GM12878 (cell line): ENCODE measurements at regions of chr1 and their contacts with region 1.

Region 1: GRCh38 chr1:179081687-179082332 is at the start of gene TOR3A:
- DNase-seq: peak; percentile 81
- ATAC-seq: peak; percentile 90
- H3K4me3 ChIP-seq: peak within 1 kb of the TSS; percentile 95
- H3K27ac ChIP-seq: peak within 1 kb of the TSS; percentile 96
- H3K4me1 ChIP-seq: peaks cover 16% of the 10 kb centered on the region
- H3K27me3 ChIP-seq: no peaks in the 10 kb centered on the region
- CTCF ChIP-seq: no peak
- EP300 ChIP-seq: peak in 1 of 2 experiments; percentile 52; a peak in 1 of 4 replicates
- POLR2A ChIP-seq: peak; percentile 98
- RAD21 ChIP-seq: no peak
- polyA plus RNA-seq, gene TOR3A: 8.6 to 14.5 TPM

Region 2: GRCh38 chr1:179025125-179025974 is 56.5 kb before region 1 on chr1 and contains the start of gene FAM20B:
- CTCF ChIA-PET with region 1: interaction called, 6 read pairs
- POLR2A ChIA-PET with region 1: interaction called, 6 read pairs
- RAD21 ChIA-PET with region 1: interaction called, 10 read pairs
- SMC1A ChIA-PET with region 1: interaction called, 30 read pairs
- in situ Hi-C with region 1: no loop called
- intact Hi-C with region 1: loop called (anchors 5 kb)
- DNase-seq: peak; percentile 59
- ATAC-seq: peak; percentile 89
- H3K4me3 ChIP-seq: peak within 1 kb of the TSS; percentile 72
- H3K27ac ChIP-seq: peak within 1 kb of the TSS; percentile 81
- H3K4me1 ChIP-seq: peaks cover 19% of the 10 kb centered on the region
- H3K27me3 ChIP-seq: no peaks in the 10 kb centered on the region
- CTCF ChIP-seq: no peak
- EP300 ChIP-seq: no peak
- POLR2A ChIP-seq: no peak
- RAD21 ChIP-seq: no peak
- polyA plus RNA-seq, gene FAM20B: 2.4 to 4.0 TPM

Region 3: DNA sequence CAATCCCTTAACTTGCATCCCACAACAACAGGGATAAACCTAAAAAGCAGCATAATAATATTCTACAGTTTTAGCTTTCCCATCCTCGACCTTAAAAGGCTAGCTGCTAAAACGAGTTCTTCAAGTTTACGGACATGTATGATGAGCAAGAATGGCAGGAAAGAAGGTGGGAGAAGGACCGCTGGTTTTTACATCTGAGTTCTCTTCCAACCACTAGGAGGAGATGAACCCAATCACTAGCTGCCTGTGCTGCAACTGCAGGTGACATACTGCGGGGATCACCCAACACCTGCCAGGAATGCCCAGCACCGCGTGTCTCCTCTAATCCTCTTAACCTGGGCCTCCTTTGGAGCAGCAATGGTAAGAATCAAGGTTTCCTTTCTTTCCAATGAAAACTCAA is 23.5 kb after region 1 on chr1:
- CTCF ChIA-PET with region 1: interaction called, 13 read pairs
- POLR2A ChIA-PET with region 1: no interaction called
- RAD21 ChIA-PET with region 1: interaction called, 6 read pairs
- SMC1A ChIA-PET with region 1: interaction called, 10 read pairs
- in situ Hi-C with region 1: no loop called
- intact Hi-C with region 1: no loop called
- DNase-seq: no peak
- ATAC-seq: peak; percentile 63
- H3K4me3 ChIP-seq: no peak overlapping the region
- H3K27ac ChIP-seq: no peak overlapping the region
- H3K4me1 ChIP-seq: no peaks in the 10 kb centered on the region
- H3K27me3 ChIP-seq: no peaks in the 10 kb centered on the region
- CTCF ChIP-seq: peak; percentile 19 to 32 (median 26); a peak in 4 of 6 replicates
- EP300 ChIP-seq: no peak
- POLR2A ChIP-seq: no peak
- RAD21 ChIP-seq: 0 out of 2 replicates have a peak, but pooled peaks have one; percentile 15

Region 4: GRCh38 chr1:179121159-179121938 is 39.5 kb after region 1 on chr1:
- CTCF ChIA-PET with region 1: interaction called, 21 read pairs
- POLR2A ChIA-PET with region 1: interaction called, 3 read pairs
- RAD21 ChIA-PET with region 1: interaction called, 9 read pairs
- SMC1A ChIA-PET with region 1: interaction called, 35 read pairs
- in situ Hi-C with region 1: no loop called
- intact Hi-C with region 1: no loop called
- DNase-seq: no peak
- ATAC-seq: peak; percentile 67
- H3K4me3 ChIP-seq: no peak overlapping the region
- H3K27ac ChIP-seq: no peak overlapping the region
- H3K4me1 ChIP-seq: no peaks in the 10 kb centered on the region
- H3K27me3 ChIP-seq: no peaks in the 10 kb centered on the region
- CTCF ChIP-seq: peak; percentile 58 to 62 (median 61)
- EP300 ChIP-seq: no peak
- POLR2A ChIP-seq: no peak
- RAD21 ChIP-seq: peak; percentile 79

Region 5: GRCh38 chr1:179127163-179127895 is 45.5 kb after region 1 on chr1:
- CTCF ChIA-PET with region 1: interaction called, 21 read pairs
- POLR2A ChIA-PET with region 1: interaction called, 3 read pairs
- RAD21 ChIA-PET with region 1: interaction called, 5 read pairs
- SMC1A ChIA-PET with region 1: interaction called, 35 read pairs
- in situ Hi-C with region 1: no loop called
- intact Hi-C with region 1: no loop called
- DNase-seq: no peak
- ATAC-seq: no peak
- H3K4me3 ChIP-seq: no peak overlapping the region
- H3K27ac ChIP-seq: no peak overlapping the region
- H3K4me1 ChIP-seq: peaks cover 6% of the 10 kb centered on the region
- H3K27me3 ChIP-seq: no peaks in the 10 kb centered on the region
- CTCF ChIP-seq: no peak
- EP300 ChIP-seq: no peak
- POLR2A ChIP-seq: no peak
- RAD21 ChIP-seq: no peak

Region 6: GRCh38 chr1:179137623-179138255 is 55.9 kb after region 1 on chr1:
- CTCF ChIA-PET with region 1: no interaction called
- POLR2A ChIA-PET with region 1: no interaction called
- RAD21 ChIA-PET with region 1: no interaction called
- SMC1A ChIA-PET with region 1: no interaction called
- in situ Hi-C with region 1: no loop called
- intact Hi-C with region 1: no loop called
- DNase-seq: no peak
- ATAC-seq: no peak
- H3K4me3 ChIP-seq: no peak overlapping the region
- H3K27ac ChIP-seq: no peak overlapping the region
- H3K4me1 ChIP-seq: no peaks in the 10 kb centered on the region; the same call in 1 of the 2 replicates
- H3K27me3 ChIP-seq: no peaks in the 10 kb centered on the region
- CTCF ChIP-seq: no peak
- EP300 ChIP-seq: no peak
- POLR2A ChIP-seq: no peak
- RAD21 ChIP-seq: no peak

Region 7: DNA sequence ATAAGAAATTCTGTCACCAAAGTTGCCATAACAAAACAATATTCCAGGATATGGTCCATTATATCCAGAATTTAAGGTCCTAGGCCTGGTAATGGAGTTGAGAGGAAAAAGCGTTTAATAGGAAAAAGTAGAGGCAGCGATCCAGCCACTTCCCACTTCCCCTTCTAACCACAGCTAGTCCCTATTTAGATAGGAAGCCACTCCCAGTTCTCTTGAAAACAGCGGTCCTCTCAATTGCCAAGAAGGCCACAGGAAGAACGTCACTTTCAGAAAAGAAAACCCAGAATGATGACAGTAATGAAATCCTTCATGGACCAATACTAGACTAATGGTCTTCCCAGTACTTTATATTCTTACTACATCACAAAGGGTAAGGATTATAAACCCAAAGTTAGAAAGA is 109.1 kb after region 1 on chr1:
- CTCF ChIA-PET with region 1: no interaction called
- POLR2A ChIA-PET with region 1: no interaction called
- RAD21 ChIA-PET with region 1: interaction called, 4 read pairs
- SMC1A ChIA-PET with region 1: interaction called, 3 read pairs
- in situ Hi-C with region 1: no loop called
- intact Hi-C with region 1: loop called (anchors 2 kb)
- DNase-seq: no peak
- ATAC-seq: no peak; the same call in 2 of the 3 replicates
- H3K4me3 ChIP-seq: no peak overlapping the region
- H3K27ac ChIP-seq: no peak overlapping the region
- H3K4me1 ChIP-seq: peaks cover 4% of the 10 kb centered on the region; the same call in 1 of the 2 replicates
- H3K27me3 ChIP-seq: no peaks in the 10 kb centered on the region
- CTCF ChIP-seq: no peak
- EP300 ChIP-seq: no peak
- POLR2A ChIP-seq: no peak
- RAD21 ChIP-seq: no peak

Region 8: DNA sequence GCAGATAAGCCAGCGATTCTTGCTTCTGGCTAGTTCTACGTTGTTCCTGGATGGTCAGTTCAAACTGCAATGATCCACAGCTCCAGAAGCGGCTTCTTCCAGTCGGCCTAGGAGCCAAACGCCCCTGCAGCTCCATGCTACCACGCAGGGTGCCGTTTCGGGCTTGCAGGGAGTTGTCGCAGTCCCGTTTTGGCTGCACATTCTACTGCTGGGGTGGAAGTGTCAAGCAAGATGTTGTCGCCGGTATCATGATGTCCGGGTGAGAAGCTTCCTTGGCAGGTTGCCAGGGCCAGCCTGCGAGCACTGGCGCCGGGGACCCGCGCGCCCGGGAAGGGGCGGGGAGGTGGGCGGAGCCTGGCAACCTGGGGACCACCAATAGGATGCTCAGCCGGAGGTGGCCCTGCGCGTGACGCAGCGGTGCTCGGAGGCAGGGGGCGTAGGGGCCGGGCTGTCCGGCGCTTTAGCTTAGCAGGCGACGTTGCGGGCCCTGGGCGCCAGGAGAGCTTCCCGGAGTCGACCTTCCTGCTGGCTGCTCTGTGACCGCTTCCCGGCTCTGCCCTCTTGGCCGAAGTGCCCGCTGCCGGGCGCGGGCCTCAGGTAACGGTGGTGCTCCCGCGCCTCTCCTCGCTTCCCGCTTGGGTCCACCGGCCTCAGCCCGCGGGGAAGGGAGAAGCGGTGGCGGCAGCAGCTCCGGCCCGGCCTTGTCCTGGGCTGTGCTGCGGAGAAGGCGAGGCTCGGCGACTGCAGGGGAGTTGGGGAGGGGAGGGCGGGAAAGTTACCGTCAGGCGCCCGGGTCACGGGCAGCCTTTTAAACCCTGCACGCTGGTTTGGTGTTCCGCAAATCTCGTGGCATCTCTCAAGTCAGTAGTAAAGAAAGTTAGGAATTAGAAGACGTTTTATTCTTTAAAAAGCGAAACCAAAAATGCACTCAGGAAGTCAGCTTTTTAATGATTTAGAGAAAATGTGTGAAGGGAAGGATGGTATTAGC is 211.8 kb after region 1 on chr1 and contains the start of gene SOAT1:
- CTCF ChIA-PET with region 1: interaction called, 49 read pairs
- POLR2A ChIA-PET with region 1: interaction called, 9 read pairs
- RAD21 ChIA-PET with region 1: interaction called, 8 read pairs
- SMC1A ChIA-PET with region 1: interaction called, 29 read pairs
- in situ Hi-C with region 1: no loop called
- intact Hi-C with region 1: loop called (anchors 1 kb)
- DNase-seq: peak; percentile 63
- ATAC-seq: peak; percentile 94
- H3K4me3 ChIP-seq: peak within 1 kb of the TSS; percentile 100
- H3K27ac ChIP-seq: peak within 1 kb of the TSS; percentile 78
- H3K4me1 ChIP-seq: no peaks in the 10 kb centered on the region
- H3K27me3 ChIP-seq: no peaks in the 10 kb centered on the region
- CTCF ChIP-seq: 0 out of 6 replicates have a peak, but pooled peaks of 1 of the 3 experiments have one; percentile 14
- EP300 ChIP-seq: no peak
- POLR2A ChIP-seq: peak; percentile 89
- RAD21 ChIP-seq: no peak
- polyA plus RNA-seq, gene SOAT1: 8.6 to 12.5 TPM

Region 9: DNA sequence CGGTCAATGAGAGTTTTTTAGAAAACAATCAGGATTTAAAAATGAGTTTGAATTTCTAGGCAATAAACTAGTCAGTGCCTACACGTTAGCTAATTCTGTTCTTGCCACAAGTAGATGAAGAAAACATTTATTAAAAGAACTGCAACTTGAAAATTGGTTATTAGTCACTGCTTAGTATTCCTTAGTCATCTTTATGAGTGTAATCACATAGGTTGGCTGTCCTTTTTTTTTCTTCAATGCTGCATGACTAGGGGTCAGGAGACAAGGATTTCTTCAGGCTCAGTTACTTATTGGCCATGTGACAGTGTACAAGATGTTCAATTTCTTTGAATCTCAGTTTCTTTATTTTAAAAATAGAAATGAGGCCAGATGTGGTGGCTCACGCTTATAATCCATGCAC is 228.9 kb after region 1 on chr1:
- CTCF ChIA-PET with region 1: no interaction called
- POLR2A ChIA-PET with region 1: no interaction called
- RAD21 ChIA-PET with region 1: no interaction called
- SMC1A ChIA-PET with region 1: no interaction called
- in situ Hi-C with region 1: no loop called
- intact Hi-C with region 1: no loop called
- DNase-seq: no peak
- ATAC-seq: peak; percentile 15; the same call in 1 of the 3 replicates
- H3K4me3 ChIP-seq: no peak overlapping the region
- H3K27ac ChIP-seq: no peak overlapping the region
- H3K4me1 ChIP-seq: no peaks in the 10 kb centered on the region
- H3K27me3 ChIP-seq: no peaks in the 10 kb centered on the region
- CTCF ChIP-seq: no peak
- EP300 ChIP-seq: no peak
- POLR2A ChIP-seq: no peak
- RAD21 ChIP-seq: no peak